Aorta (tissue), 5 donors: ENCODE measurements at regions of chrX and their contacts with region 1.

Region 1: DNA sequence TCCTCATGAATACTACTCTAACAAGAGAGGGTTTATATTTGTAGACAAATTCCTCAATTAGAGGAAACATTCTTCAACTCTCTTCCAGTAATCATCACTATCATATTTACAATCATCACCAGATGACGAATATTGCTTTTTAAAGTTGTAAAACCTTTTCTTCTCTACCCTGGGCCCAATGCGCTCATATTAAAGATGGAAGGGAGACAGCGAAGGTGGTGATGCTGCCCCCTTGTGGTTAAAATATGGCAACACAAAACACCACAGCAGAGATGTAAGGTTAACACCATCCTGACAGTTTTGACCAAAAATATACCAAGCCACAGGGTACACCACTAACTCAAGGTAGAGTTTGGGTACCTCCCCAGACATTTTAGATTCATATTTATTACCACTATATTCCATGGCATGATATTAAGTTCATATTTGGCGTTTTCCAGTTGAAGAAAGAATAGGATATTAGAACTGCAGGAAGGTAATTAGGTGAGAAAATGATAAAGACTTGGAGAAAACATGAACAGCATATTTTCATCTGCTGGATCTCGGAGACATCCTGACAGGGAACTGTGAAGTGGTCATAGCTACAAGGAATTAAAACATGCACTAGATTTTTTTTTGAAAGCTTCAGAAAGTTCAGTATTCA is 72.8 kb downstream of the SLC9A7 start:
- DNase-seq: no peak
- ATAC-seq: peak; percentile 65
- H3K4me3 ChIP-seq: no peak overlapping the region
- H3K27ac ChIP-seq: no peak overlapping the region
- H3K4me1 ChIP-seq: no peaks in the 10 kb centered on the region
- H3K27me3 ChIP-seq: no peaks in the 10 kb centered on the region

Region 2: DNA sequence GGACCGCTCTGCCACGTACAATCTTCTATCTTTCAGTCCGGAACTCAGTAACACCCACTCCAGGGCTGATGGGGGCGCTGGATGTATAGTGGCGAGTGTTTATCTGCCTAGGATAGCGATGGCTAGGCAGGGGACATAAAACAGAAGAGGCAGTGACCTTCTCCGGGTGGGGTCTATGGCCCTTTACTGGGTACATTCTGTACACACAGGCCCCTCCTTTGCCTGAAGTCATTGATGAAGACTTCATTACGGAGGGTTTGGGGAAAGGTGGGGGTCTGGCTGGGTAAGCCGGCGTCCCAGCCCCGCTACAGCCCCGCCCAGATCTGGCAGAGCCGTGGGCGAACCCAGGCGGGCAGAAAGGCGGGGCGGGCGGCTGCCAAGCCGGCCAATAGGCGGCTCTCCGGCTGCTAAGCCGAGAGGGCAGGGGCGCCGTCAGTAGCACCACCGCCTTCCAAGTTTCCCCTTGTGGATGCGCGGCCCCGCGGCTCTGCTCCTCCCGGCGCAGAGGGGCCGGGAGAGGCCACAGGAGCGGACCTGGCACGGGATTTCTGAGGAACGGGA is 112.7 kb before region 1 on chrX and contains the start of gene CHST7:
- intact Hi-C with region 1: loop called in 1 of 2 experiments (anchors 10 kb)
- DNase-seq: peak; percentile 79 to 87
- ATAC-seq: peak; percentile 83
- H3K4me3 ChIP-seq: peak within 1 kb of the TSS; percentile 1 to 15
- H3K27ac ChIP-seq: peak within 1 kb of the TSS in 1 of 2 donors; percentile 82
- H3K4me1 ChIP-seq: peaks cover 0 to 2% of the 10 kb centered on the region in 2 donors
- H3K27me3 ChIP-seq: no peaks in the 10 kb centered on the region
- total RNA-seq, gene CHST7: 5.2 to 8.5 TPM

Region 3: GRCh38 chrX:46601283-46601682 is 84.8 kb before region 1 on chrX:
- intact Hi-C with region 1: no loop called
- DNase-seq: no peak
- ATAC-seq: no peak
- H3K4me3 ChIP-seq: no peak overlapping the region
- H3K27ac ChIP-seq: no peak overlapping the region
- H3K4me1 ChIP-seq: no peaks in the 10 kb centered on the region
- H3K27me3 ChIP-seq: no peaks in the 10 kb centered on the region